Prostate gland (tissue), 2 donors: ENCODE measurements at regions of chr19 and their contacts with region 1.

Region 1: DNA sequence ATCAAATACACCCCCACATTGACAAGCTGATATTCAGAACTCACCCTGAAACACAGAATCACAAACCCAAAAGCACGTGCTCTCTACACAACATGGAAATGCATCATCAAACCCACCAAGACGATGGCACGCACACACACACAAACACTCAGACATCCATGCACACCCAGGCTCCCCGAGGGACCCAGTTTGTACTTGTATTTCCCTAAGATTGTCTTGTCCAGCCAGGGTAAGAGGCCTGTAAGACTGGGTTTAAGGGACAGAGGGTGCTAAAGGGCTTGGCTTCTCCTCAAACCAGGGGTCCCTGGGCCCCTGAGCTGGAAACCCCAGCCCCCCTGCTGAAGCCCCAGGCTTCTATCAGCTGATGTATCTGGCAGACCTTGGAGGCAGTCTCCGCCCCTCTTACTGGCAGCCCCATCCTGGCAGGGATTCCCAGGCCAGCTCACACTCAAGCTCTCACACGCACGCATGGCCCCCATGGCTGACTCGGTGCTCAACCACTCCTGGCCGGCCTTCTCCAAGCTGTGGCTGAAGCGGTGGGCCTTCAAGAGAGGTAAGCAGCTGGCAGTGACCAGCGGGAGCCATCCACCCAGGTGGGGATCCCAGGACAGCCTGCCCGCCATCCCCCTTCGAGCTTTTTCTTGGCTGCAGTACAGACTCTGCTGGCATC is 6.5 kb downstream of the ARHGEF18 start:
- DNase-seq: no peak
- H3K4me3 ChIP-seq: no peak overlapping the region
- H3K27ac ChIP-seq: no peak overlapping the region
- H3K4me1 ChIP-seq: no peaks in the 10 kb centered on the region
- H3K27me3 ChIP-seq: no peaks in the 10 kb centered on the region
- CTCF ChIP-seq: no peak
- POLR2A ChIP-seq: no peak

Region 2: DNA sequence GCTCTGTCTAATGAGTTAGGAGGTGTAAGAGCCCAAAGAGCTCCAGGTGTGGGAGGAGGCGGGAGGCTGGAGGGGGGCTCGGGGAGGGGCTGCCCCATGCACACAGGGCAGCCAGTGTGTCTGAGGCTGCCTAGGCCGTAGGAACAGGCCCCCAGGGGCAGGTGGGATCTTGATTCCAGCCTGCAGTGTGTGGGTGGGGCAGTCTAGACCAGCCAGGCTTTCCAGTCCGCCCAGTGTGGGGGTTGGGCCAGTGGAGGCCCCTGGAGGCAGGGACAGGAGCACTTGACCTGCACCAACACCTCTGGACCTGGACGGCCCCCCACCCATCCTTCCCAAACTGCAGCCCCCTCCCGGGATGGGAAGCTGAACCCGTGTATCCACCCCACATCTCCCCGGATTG is 235.0 kb after region 1 on chr19:
- intact Hi-C with region 1: no loop called
- DNase-seq: peak; percentile 42
- H3K4me3 ChIP-seq: no peak overlapping the region
- H3K27ac ChIP-seq: no peak overlapping the region
- H3K4me1 ChIP-seq: peaks cover 4% of the 10 kb centered on the region
- H3K27me3 ChIP-seq: no peaks in the 10 kb centered on the region
- CTCF ChIP-seq: no peak
- POLR2A ChIP-seq: no peak

Region 3: DNA sequence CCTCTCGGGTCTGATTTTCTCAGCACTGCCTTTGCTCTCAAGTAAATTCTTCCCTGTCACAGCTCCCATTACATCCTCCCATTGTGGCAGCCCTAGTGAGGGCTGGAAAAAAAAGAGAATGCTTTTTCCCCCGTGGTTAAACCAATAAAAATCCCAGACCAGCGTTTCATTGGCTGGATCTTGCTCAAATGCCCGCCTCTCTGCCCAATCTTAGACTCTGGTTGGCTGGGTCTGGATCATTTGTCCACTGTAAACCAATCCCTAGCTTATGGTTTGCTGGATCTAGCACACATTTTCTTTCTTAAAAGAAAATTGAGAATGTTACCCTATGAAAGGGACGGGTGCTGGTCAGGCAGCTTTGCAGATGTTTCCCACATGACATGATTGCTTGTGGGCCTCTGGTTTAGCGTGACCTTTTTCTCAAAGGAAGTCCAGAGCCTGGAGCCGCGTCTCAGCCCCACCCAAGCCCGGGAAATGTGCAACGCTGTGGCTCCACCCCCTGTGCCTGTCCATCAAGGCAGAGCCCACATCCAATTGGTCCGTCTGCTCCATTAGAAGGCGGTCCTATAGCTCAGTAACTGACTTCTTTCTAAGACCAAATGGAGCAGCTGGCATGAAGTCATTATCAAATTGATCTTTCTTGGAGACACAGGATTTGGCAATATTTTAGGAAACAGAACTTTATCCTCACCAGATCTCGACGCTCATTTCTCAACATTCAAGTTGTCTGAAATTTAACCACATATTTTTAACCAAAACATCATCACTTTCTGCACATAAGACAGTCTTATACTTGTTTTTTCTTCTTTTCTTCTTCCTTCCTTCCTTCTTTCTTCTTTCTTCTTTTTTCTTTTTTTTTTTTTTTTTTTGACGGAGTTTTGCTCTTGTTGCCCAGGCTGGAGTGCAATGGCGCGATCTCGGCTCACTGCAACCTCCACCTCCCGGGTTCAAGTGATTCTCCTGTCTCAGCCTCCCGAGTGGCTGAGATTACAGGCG is 319.0 kb after region 1 on chr19:
- intact Hi-C with region 1: loop called (anchors 5 kb)
- DNase-seq: no peak
- H3K4me3 ChIP-seq: no peak overlapping the region
- H3K27ac ChIP-seq: no peak overlapping the region
- H3K4me1 ChIP-seq: no peaks in the 10 kb centered on the region
- H3K27me3 ChIP-seq: peaks cover 2% of the 10 kb centered on the region
- CTCF ChIP-seq: no peak
- POLR2A ChIP-seq: no peak